GM10248 (cell line): ENCODE measurements at regions of chr1 and their contacts with region 1.

Region 1: GRCh38 chr1:228131766-228132165 is 8.3 kb upstream of the GUK1 start:
- DNase-seq: no peak
- CTCF ChIP-seq: no peak

Region 2: DNA sequence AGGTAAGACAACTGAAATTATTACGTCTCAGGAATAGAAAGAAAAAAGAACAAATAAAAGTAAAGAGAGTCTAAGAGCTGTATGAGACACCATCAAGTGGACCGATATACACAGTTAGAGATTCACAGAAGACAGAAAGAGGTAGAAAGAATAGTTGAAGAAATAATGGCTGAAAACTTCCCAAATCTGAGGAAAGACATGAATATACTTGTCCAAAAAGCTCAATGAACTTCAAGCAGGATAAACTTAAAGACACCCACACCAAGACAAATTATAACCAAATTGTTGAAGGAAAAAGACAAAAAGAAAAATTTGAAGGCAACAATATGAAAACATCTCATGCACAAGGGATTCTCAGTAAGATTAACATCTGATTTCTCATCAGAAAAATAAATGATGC is 144.6 kb before region 1 on chr1:
- CTCF ChIA-PET with region 1: no interaction called
- POLR2A ChIA-PET with region 1: no interaction called
- DNase-seq: no peak
- CTCF ChIP-seq: no peak

Region 3: DNA sequence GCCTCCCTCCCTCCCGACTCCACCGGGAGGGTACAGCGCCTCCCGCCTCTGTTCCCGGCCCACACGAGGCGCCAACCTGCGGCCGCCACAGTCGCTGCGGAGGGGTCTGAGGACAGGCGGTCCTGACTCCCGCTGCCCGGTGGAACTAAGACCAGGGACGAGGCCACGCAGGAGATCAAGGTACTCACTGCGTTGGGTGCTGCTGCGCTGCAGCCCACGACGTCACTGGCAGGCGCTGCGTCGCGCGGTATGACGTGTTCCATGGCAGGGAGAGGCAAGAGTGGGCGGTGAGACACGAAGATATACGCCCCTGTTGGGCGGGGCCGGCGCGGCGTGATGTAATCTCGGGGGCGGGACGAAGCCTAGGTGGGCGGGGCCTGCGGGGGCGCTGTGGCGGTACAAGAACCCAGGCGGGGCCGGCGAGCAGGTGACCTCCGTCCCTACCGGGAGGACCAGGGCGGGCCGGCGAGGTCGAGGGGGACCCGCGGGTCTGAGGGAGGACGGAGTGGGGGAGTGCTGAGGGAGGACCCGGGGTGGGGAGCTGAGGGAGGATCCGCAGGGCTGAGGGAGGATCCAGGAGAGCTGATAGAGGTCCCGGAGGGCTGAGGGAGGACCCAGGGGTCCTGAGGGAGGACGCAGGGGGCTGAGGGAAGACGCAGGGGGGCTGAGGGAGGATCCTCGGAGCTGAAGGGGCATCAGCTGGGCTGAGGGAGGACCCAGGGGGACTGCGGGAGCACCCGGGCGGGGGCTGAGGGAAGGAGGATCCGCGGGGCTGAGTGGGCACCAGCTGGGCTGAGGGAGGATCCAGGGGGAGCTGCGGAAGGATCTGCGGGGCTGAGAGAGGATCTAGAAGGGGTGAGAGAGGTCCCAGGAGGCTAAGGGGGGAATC is 22.4 kb before region 1 on chr1 and contains the start of gene MRPL55:
- CTCF ChIA-PET with region 1: interaction called, 18 read pairs
- POLR2A ChIA-PET with region 1: interaction called, 3 read pairs
- DNase-seq: peak; percentile 98
- CTCF ChIP-seq: no peak

Region 4: GRCh38 chr1:228120857-228121489 is 10.8 kb before region 1 on chr1:
- CTCF ChIA-PET with region 1: interaction called, 50 read pairs
- POLR2A ChIA-PET with region 1: no interaction called
- DNase-seq: no peak
- CTCF ChIP-seq: no peak

Region 5: DNA sequence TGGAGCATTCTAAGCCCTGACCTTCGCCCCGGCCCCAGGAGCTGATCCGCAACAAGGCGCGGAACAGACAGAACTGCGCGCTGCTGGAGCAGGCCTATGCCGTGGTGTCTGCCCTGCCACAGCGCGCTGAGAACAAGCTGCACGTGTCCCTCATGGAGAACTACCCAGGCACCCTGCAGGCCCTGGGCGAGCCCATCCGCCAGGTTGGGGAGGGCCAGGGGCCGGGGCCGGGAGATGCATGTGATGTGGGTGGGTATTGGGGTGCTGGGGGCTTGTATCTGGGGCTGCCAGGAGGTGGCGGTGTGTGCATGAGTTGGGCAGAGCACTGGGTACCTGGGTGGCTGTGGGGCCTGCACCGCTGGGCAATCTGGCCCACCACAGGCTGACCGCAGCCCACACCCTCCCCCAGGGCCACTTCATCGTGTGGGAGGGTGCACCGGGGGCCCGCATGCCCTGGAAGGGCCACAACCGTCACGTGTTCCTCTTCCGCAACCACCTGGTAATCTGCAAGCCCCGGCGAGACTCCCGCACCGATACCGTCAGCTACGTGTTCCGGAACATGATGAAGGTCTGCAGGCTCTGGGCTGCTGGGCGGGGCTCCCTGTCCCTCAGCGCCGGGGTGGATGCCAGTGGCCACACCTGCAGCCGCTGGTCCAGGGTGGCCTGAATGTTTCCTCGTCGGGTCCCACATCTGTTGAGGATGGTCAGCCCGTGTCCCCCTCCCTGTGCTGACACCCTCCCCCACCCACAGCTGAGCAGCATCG is 209.1 kb after region 1 on chr1:
- CTCF ChIA-PET with region 1: no interaction called
- POLR2A ChIA-PET with region 1: no interaction called
- DNase-seq: no peak
- CTCF ChIP-seq: peak; percentile 17